Mammary epithelial cell (primary cell): ENCODE measurements at regions of chr2 and their contacts with region 1.

Region 1: DNA sequence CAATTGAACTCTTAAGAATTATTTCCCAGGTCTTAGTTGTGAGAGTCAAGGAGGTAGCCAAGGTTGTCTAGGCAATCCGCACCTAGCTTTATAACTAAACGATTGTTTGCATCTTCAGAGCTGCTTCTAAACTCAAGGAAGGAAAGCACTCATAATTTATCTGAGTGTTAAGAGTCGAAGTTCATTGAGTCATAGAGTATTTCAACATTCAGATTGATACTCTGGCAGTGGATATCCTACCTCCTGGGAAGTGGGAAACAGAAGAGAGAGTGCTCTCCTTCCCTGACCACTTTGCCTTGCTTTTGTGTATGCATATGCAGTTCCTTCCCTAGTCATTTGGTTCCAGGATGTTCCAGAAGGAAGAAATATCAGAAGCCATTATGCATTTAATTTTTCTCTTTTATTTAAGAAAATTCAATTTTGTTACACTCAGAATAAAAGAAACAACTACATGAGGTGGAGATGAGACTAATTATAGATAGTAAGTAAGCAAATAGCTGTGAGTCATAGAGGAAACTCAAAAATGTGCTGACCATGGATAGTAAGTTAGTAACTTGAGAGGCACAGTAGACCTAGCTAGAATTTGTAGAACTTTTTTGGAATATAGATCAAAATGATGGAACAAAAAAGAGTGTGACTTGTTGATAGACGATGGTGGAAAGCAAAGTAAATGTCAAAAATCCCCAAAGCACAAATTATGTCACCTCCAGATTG is 35.4 kb upstream of the FSHR start:
- DNase-seq: no peak
- H3K4me3 ChIP-seq: no peak overlapping the region
- H3K27ac ChIP-seq: no peak overlapping the region
- H3K4me1 ChIP-seq: no peaks in the 10 kb centered on the region
- H3K27me3 ChIP-seq: no peaks in the 10 kb centered on the region
- CTCF ChIP-seq: no peak

Region 2: GRCh38 chr2:48755473-48755872 is 434.2 kb before region 1 on chr2 and contains the start of gene LHCGR:
- CTCF ChIA-PET with region 1: no interaction called
- dilution Hi-C with region 1: loop called (anchors 10 kb)
- in situ Hi-C with region 1: no loop called
- intact Hi-C with region 1: no loop called
- DNase-seq: no peak
- H3K4me3 ChIP-seq: no peak within 1 kb of the TSS
- H3K27ac ChIP-seq: no peak within 1 kb of the TSS
- H3K4me1 ChIP-seq: no peaks in the 10 kb centered on the region
- H3K27me3 ChIP-seq: peaks cover 5% of the 10 kb centered on the region
- CTCF ChIP-seq: no peak
- total RNA-seq, gene LHCGR: not detected